HepG2 (cell line): ENCODE measurements at regions of chr20 and their contacts with region 1.

Region 1: GRCh38 chr20:24577271-24577909 is 108.0 kb downstream of the SYNDIG1 start:
- DNase-seq: no peak
- ATAC-seq: no peak
- H3K4me3 ChIP-seq: no peak overlapping the region
- H3K27ac ChIP-seq: no peak overlapping the region
- H3K4me1 ChIP-seq: no peaks in the 10 kb centered on the region
- H3K27me3 ChIP-seq: no peaks in the 10 kb centered on the region; a peak in 1 of 5 replicates
- CTCF ChIP-seq: no peak
- EP300 ChIP-seq: no peak
- POLR2A ChIP-seq: no peak
- RAD21 ChIP-seq: no peak

Region 2: DNA sequence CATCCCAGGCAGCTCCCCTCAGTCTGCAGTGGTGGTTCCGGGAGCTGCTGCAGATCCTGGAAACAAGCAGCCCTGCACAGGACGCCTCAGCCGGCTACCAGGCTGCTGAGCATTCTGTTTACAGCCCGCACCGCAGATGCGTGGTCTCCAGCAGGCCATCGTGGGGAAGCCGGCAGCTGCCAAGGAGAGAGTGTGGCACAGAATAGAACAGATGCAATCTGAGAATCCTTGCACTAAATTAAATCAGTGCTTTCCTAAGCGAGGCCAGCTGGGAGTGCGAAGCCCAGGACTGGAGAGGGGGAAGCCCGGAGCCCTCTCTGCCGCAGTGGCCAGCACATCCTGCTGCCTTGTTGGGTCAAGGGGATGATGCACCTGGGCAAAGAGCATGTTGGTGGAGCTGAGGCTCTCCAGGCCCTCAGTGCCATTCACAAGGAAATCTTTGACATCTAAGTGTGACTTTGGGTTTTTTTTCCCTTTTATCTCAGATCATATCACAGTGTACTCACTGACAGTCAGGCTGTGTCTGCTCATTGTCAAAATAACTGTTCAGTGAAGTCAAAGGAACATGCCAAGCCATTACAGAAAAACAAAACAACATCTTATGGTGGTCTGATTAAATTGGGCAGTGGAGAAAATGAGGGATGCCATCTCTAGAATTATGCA is 10.1 kb after region 1 on chr20:
- CTCF ChIA-PET with region 1: no interaction called
- POLR2A ChIA-PET with region 1: no interaction called
- in situ Hi-C with region 1: no loop called
- intact Hi-C with region 1: no loop called
- DNase-seq: no peak
- ATAC-seq: no peak
- H3K4me3 ChIP-seq: no peak overlapping the region
- H3K27ac ChIP-seq: no peak overlapping the region
- H3K4me1 ChIP-seq: no peaks in the 10 kb centered on the region
- H3K27me3 ChIP-seq: peaks cover 9 to 52% of the 10 kb centered on the region in 2 experiments; a peak in 3 of 5 replicates
- CTCF ChIP-seq: no peak
- EP300 ChIP-seq: no peak
- POLR2A ChIP-seq: no peak
- RAD21 ChIP-seq: no peak

Region 3: DNA sequence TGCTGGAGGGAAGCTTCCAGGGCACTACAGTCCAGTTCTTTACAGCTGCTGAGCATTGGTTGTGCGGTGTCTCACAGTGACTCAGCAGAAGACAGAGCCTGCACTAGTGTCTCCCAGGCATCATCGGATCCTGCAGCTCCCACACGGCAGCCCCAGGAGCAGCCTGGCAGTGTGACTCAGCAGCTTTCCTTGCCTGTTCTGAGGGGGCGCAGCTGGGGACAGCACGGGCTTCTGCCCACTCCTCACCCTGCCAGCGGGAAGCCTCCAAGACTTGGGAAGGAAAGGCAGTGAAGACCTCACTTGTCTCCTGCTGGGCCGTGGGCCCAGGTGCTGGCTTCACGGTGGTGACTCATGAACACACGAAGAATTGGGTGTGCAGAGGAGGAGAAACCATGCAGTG is 57.5 kb after region 1 on chr20:
- CTCF ChIA-PET with region 1: no interaction called
- POLR2A ChIA-PET with region 1: no interaction called
- in situ Hi-C with region 1: loop called (anchors 10 kb)
- intact Hi-C with region 1: no loop called
- DNase-seq: peak; percentile 42
- ATAC-seq: peak; percentile 83
- H3K4me3 ChIP-seq: no peak overlapping the region
- H3K27ac ChIP-seq: no peak overlapping the region
- H3K4me1 ChIP-seq: no peaks in the 10 kb centered on the region
- H3K27me3 ChIP-seq: peaks cover 0 to 15% of the 10 kb centered on the region in 2 experiments; a peak in 2 of 5 replicates
- CTCF ChIP-seq: no peak
- EP300 ChIP-seq: no peak
- POLR2A ChIP-seq: no peak
- RAD21 ChIP-seq: no peak